ENCODE measurements at regions of chr9 and their contacts with region 1.

Region 1: DNA sequence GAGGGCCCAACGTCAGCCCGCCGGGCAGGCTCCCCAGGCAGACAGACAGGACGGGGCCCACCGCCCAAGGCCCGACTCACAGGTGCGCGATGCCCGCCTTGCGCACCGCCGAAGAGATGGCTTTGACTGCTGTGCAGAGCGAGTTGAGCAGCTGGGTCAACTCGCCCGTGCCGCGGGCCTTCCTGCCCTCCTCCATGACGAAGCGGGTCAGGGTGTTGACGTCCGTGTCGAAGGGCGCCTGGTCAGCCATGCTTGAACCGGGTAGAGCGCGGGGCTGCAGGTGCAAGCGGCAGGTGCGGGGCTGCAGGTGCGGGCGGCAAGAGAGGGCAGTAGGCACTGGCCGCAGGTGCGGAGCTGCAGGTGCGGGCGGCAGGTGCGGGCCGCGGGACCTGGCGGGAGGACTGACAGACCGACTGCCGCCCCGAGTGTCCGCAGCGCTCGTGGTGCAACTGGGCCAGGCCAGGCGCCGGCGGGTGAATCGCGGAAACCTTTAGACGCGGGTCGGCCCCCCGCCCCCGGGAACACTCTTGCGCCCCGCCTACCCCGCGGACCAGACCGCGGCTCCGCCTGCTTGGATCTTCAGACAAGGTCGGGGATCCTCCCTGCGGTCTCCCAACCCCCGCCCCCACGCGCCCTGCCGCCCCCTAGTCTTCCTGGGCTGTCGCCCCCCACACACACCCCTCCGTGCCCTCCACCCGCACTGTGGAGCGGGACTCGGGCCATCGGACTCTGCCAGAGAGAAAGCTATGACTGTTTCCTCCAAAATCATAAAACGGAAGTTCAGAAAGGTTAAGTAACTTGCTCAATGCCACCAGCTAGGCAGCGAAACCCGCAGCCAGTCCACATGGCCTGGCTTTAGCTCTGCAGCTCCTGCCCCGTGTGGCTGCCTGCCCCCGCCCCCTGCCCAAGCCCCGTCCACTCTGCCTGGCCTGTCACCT is at the start of gene FBP1:
- DNase-seq: peak in 4 of 5 donors; percentile 16 to 20 (median 17)
- H3K4me3 ChIP-seq: peak within 1 kb of the TSS; percentile 42 to 69
- H3K4me3 Mint-ChIP-seq: peak within 1 kb of the TSS; percentile 92 to 98 (median 97)
- H3K27ac ChIP-seq: peak within 1 kb of the TSS; percentile 30
- H3K27ac Mint-ChIP-seq: peak within 1 kb of the TSS; percentile 32 to 93 (median 85)
- H3K4me1 ChIP-seq: peaks cover 11% of the 10 kb centered on the region
- H3K4me1 Mint-ChIP-seq: peaks cover 8 to 18% (median 14%) of the 10 kb centered on the region in 4 donors
- H3K27me3 ChIP-seq: no peaks in the 10 kb centered on the region
- H3K27me3 Mint-ChIP-seq: peaks cover 4 to 5% of the 10 kb centered on the region in 2 donors
- total RNA-seq, gene FBP1: 6.3 to 9.2 TPM

Region 2: DNA sequence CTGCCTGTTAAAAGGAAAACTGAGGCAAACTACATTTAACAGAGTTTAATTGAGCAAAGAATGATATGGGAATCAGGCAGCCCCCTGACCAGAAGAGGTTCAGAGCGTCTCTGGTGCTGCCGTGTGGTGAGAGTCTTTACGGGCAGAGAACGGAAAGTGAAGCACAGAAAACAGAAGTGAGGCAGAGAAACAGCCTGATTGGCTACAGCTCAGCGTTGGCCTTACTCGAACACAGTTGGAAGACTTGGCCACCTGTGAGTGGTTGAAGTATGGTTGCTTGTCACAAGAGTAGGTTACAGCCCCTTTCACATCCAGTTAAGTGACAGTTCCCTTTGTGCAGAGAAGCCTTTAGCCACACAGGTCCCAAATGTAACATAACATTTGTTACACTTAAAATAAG is 16.9 kb after region 1 on chr9:
- CTCF ChIA-PET with region 1: no interaction called
- POLR2A ChIA-PET with region 1: interaction called, 11 read pairs
- intact Hi-C with region 1: no loop called
- DNase-seq: peak in 4 of 5 donors; percentile 29 to 55 (median 38)
- H3K4me3 ChIP-seq: peak overlapping the region; percentile 9 to 10
- H3K4me3 Mint-ChIP-seq: peak overlapping the region; percentile 46 to 91 (median 76)
- H3K27ac ChIP-seq: no peak overlapping the region
- H3K27ac Mint-ChIP-seq: peak overlapping the region in 6 of 7 donors; percentile 24 to 82 (median 76)
- H3K4me1 ChIP-seq: peaks cover 13% of the 10 kb centered on the region
- H3K4me1 Mint-ChIP-seq: peaks cover 9 to 17% (median 14%) of the 10 kb centered on the region in 4 donors
- H3K27me3 ChIP-seq: no peaks in the 10 kb centered on the region
- H3K27me3 Mint-ChIP-seq: peaks cover 0 to 2% of the 10 kb centered on the region in 2 donors

Region 3: DNA sequence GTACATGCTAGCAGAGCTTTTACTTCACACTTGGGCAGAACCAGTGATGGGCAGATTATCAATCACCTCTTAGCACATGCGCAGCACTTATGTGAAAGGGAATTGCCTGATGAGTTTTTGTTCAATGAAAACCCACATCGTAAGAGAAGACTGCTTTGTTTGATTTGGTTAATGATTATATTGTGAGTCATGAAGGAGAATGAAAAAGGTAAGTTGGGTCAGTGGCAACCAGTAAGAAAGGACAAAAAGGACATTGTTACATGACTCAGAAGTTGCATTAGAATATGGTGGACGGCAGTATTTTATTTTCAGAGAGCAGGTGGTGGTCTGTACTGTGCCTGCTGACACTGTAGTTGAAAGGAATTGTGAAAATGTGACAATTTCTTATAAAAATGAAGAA is 214.6 kb after region 1 on chr9:
- CTCF ChIA-PET with region 1: no interaction called
- POLR2A ChIA-PET with region 1: no interaction called
- intact Hi-C with region 1: no loop called
- DNase-seq: no peak
- H3K4me3 ChIP-seq: no peak overlapping the region
- H3K4me3 Mint-ChIP-seq: no peak overlapping the region
- H3K27ac ChIP-seq: no peak overlapping the region
- H3K27ac Mint-ChIP-seq: no peak overlapping the region
- H3K4me1 ChIP-seq: peaks cover under 1% of the 10 kb centered on the region
- H3K4me1 Mint-ChIP-seq: peaks cover 0 to 5% (median 2%) of the 10 kb centered on the region in 4 donors
- H3K27me3 ChIP-seq: no peaks in the 10 kb centered on the region
- H3K27me3 Mint-ChIP-seq: no peaks in the 10 kb centered on the region

Region 4: DNA sequence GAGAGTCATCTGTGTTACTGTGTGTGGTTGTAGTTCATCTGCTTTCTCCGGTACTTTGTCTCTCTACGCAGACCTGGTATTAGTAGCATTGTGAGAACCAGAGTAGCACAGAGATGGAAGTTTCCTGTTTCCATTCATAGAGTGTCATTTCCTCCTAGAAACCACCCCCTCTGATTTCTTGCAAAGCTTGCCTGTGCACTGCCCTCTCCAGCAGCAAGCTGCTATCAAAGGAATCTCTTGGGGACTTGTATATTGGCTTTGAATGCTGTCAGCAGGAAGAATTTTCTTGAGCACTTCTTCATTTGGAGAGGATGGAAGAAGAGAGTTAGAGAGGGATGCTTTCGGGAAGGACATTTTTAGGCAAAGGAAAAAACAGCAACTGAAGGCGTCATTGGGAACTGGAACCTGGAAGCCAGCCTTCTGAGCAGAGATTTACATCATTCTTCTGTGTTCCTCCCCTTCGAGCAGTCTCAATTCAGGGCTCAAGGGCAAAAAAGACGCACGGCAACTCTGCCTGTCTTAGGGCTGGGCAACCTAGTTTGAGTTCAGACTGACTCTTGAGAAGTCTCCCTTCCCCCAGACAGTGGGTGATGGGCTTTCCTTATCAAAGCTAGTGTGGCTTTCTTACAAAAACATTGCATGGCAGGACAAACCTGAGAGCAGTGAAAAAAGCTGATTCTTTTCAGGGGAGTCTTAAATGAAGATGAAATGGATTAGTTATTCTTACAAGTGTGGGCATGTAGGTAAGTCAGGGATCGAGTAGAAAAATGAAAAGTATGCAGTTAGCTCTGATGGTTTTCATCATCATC is 313.4 kb after region 1 on chr9:
- CTCF ChIA-PET with region 1: no interaction called
- POLR2A ChIA-PET with region 1: no interaction called
- intact Hi-C with region 1: no loop called
- DNase-seq: peak in 4 of 5 donors; percentile 15 to 38 (median 20)
- H3K4me3 ChIP-seq: no peak overlapping the region
- H3K4me3 Mint-ChIP-seq: peak overlapping the region in 7 of 8 donors; percentile 45 to 85 (median 66)
- H3K27ac ChIP-seq: no peak overlapping the region
- H3K27ac Mint-ChIP-seq: peak overlapping the region in 6 of 7 donors; percentile 1 to 72 (median 50)
- H3K4me1 ChIP-seq: peaks cover 33% of the 10 kb centered on the region
- H3K4me1 Mint-ChIP-seq: peaks cover 21 to 43% (median 31%) of the 10 kb centered on the region in 4 donors
- H3K27me3 ChIP-seq: no peaks in the 10 kb centered on the region
- H3K27me3 Mint-ChIP-seq: no peaks in the 10 kb centered on the region